Heart right ventricle (tissue), 16 donors: ENCODE measurements at regions of chr10 and their contacts with region 1.

Region 1: DNA sequence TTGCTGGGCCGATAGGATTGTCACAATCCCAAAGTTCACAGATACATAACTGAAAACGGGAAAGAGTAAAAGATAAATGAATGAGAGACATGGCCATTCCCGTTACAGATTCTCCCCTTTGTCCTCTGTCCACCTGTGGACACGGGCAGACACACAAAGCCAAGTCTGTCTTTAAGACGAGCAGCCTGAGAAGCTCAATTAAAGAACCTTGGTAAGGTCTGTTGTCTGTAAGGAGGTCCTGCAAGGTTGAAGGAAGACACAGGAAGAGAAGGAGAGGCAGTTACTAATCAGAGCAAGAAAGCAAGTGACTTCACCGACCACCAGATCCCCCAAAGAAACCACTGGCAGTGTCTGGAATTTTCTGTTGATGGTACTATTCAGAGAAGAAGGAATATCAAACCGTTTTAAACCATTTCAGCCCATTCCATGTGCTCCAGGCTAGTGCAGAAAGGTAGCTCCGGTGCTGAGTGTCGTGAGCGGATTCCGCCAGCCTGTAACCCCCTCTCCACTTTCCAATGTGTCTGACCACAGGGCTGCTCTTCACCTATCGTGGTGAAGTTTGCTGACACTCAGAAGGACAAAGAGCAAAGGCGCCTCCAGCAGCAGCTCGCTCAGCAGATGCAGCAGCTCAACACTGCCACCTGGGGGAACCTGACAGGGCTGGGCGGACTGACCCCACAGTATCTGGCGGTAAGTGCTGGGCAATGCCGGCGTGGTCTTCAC is 252.6 kb downstream of the CELF2 start:
- DNase-seq: peak; percentile 83 to 84
- ATAC-seq: peak; percentile 92 to 98 (median 96)
- H3K4me3 ChIP-seq: no peak overlapping the region
- H3K27ac ChIP-seq: peak overlapping the region in 6 of 10 donors; percentile 9 to 55 (median 39)
- H3K4me1 ChIP-seq: peaks cover 0 to 37% (median 23%) of the 10 kb centered on the region in 9 donors
- H3K27me3 ChIP-seq: no peaks in the 10 kb centered on the region
- CTCF ChIP-seq: peak; percentile 63 to 96 (median 90)

Region 2: DNA sequence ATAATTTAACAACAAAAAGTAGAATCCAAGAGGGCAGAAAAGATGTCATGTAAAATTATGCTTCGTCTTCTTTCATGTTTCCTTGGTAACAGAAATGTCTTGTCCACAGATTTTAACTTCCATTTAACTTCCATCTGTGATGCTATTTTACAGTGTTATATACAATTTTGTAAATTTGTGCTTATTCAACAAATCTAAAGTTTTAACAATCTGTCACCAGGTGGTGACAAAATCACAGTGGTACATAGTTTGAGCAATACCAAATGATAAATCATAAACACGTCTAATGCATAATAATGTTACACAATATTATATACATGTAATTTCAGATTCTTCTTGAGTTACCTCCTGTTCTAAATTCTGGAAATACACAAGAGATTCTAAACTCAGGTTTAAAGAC is 1037.1 kb before region 1 on chr10:
- intact Hi-C with region 1: loop called in 2 of 10 experiments (anchors 10 kb)
- DNase-seq: no peak
- ATAC-seq: no peak
- H3K4me3 ChIP-seq: no peak overlapping the region
- H3K27ac ChIP-seq: no peak overlapping the region
- H3K4me1 ChIP-seq: no peaks in the 10 kb centered on the region
- H3K27me3 ChIP-seq: no peaks in the 10 kb centered on the region
- CTCF ChIP-seq: peak in 6 of 9 donors; percentile 33 to 57 (median 45)

Region 3: GRCh38 chr10:11170993-11171851 is 99.1 kb before region 1 on chr10:
- intact Hi-C with region 1: loop called in 2 of 10 experiments (anchors 5 kb)
- DNase-seq: no peak
- ATAC-seq: peak in 4 of 8 donors; percentile 18 to 68 (median 31)
- H3K4me3 ChIP-seq: peak overlapping the region in 1 of 10 donors; percentile 75
- H3K27ac ChIP-seq: peak overlapping the region in 8 of 10 donors; percentile 2 to 97 (median 21)
- H3K4me1 ChIP-seq: peaks cover 0 to 90% (median 40%) of the 10 kb centered on the region in 9 donors
- H3K27me3 ChIP-seq: no peaks in the 10 kb centered on the region
- CTCF ChIP-seq: no peak